WTC11 (cell line): ENCODE measurements at regions of chr3 and their contacts with region 1.

Region 1: DNA sequence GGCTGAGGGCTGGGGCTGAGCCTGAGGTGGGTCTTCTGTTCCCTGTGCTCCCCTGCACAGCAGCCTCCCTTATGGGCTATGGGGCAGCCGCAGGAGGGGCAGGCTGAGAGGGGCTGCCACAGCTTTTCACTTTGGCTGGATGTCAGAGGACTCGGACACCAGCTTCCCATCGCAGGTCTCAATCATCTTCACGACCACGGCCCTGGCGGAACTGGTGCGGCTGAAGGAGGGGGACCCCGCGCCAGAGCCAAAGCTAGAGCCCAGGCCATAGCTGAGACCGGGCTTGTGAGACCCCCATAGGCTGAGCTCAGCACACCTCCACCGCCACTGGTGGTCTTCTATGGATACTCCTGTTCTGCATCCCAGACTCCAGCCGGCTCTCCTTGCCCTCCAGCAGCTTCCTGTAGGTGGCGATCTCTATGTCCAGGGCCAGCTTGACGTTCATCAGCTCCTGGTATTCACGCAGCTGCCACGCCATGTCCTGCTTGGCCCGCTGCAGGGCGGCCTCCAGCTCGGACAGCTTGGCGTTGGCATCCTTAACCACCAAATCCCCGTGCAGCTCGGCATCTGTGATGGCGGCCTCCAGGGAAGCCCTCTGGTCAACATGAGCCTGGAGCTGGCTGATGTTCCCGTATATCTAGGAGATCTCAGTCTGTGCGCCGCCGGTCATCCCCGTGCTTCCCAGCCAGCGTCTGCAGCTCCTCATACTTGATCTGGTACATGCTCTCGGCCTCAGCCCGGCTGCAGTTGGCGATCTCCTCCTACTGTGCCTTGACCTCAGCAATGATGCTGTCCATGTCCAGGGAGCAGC is 181.7 kb upstream of the SYNPR start:
- DNase-seq: peak; percentile 38
- ATAC-seq: peak; percentile 60
- H3K4me3 Mint-ChIP-seq: no peak overlapping the region
- H3K27ac Mint-ChIP-seq: no peak overlapping the region
- H3K4me1 Mint-ChIP-seq: peaks cover 36% of the 10 kb centered on the region
- H3K27me3 Mint-ChIP-seq: no peaks in the 10 kb centered on the region
- CTCF ChIP-seq: no peak; the same call in 1 of the 2 replicates

Region 2: GRCh38 chr3:63056932-63057331 is 39.5 kb before region 1 on chr3:
- CTCF ChIA-PET with region 1: no interaction called
- POLR2A ChIA-PET with region 1: no interaction called
- DNase-seq: no peak
- ATAC-seq: no peak
- H3K4me3 Mint-ChIP-seq: no peak overlapping the region
- H3K27ac Mint-ChIP-seq: peak overlapping the region; percentile 88
- H3K4me1 Mint-ChIP-seq: peaks cover 15% of the 10 kb centered on the region
- H3K27me3 Mint-ChIP-seq: no peaks in the 10 kb centered on the region
- CTCF ChIP-seq: no peak

Region 3: GRCh38 chr3:63111931-63112330 is 15.5 kb after region 1 on chr3:
- CTCF ChIA-PET with region 1: interaction called, 14 read pairs
- POLR2A ChIA-PET with region 1: no interaction called
- DNase-seq: no peak
- ATAC-seq: no peak
- H3K4me3 Mint-ChIP-seq: no peak overlapping the region
- H3K27ac Mint-ChIP-seq: no peak overlapping the region
- H3K4me1 Mint-ChIP-seq: peaks cover 14% of the 10 kb centered on the region
- H3K27me3 Mint-ChIP-seq: peaks cover 2% of the 10 kb centered on the region; the same call in 1 of the 2 replicates
- CTCF ChIP-seq: no peak